Activated CD8-positive, alpha-beta T cell treated with anti-CD3 and anti-CD28 coated beads for 36 hours (primary cell): ENCODE measurements at regions of chr2 and their contacts with region 1.

Region 1: GRCh38 chr2:73163483-73164367 is 38.6 kb upstream of the NOTO start:
- DNase-seq: peak; percentile 77
- ATAC-seq: peak; percentile 94
- H3K4me3 Mint-ChIP-seq: no peak overlapping the region
- H3K27ac Mint-ChIP-seq: no peak overlapping the region
- H3K4me1 Mint-ChIP-seq: no peaks in the 10 kb centered on the region
- H3K27me3 Mint-ChIP-seq: peaks cover 1% of the 10 kb centered on the region
- CTCF ChIP-seq: peak; percentile 82

Region 2: DNA sequence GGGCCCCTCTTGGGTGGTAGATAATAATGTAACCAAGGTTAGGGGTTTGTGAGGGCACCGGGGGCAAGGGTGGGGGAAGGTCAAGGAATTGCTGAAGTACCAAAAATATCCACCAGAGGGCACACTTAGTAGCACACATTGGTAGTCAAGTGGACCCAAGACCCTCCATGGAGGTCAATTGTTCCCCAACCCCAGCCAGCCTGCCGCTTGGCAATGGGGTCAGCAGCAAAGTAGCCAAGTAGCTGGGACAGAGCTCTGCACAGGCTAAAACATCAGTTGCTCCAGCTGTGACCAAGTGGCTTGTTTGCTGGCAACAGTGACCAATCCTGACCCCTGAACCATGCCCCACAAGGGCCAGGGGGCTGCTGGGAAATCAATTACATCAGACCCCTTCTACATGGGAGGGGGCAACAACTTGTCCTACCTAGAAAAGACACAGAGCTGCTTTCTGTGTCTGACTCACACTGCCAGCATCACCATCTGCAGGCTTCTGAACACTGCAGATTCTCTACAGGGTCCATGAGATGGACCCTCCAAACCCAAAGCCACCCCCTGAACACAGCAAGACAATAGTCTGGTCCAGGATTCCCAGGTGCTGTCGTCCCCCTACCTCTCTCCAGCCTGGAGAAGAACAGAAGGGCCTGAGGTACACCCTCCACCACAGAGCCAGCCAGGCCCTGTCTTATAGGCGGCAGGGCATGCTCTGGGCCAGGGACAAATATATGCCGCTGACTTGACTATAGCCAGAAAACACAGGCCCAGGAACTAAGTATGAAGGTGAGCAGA is 170.4 kb before region 1 on chr2:
- CTCF ChIA-PET with region 1: interaction called, 9 read pairs
- POLR2A ChIA-PET with region 1: no interaction called
- intact Hi-C with region 1: loop called (anchors 5 kb)
- DNase-seq: peak; percentile 51
- ATAC-seq: peak; percentile 79
- H3K4me3 Mint-ChIP-seq: no peak overlapping the region
- H3K27ac Mint-ChIP-seq: no peak overlapping the region
- H3K4me1 Mint-ChIP-seq: no peaks in the 10 kb centered on the region
- H3K27me3 Mint-ChIP-seq: no peaks in the 10 kb centered on the region
- CTCF ChIP-seq: peak; percentile 81